ENCODE measurements at regions of chr2 and their contacts with region 1.

Region 1: DNA sequence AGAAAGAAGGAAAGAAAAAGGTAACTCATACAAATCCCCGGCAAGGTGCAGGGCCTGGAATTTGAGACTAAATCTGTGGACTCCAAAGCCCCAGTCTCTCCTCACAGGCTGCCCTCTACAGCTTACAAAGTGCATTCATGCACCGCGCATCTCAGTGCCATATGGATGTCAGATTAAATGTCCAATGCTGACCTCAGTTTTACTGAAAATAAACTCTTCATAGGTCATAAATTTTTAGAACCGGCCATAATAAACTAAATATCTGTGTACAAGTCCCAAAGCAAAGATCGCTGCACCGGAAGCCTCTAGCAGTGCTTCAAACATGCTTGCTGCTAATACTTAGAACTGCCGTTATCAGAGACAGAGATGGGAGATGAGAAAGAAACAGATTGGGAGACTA is 17.7 kb downstream of the ST6GAL2 start:
- DNase-seq: no peak
- H3K4me3 ChIP-seq: peak overlapping the region; percentile 32 to 51
- H3K27ac ChIP-seq: peak overlapping the region; percentile 80 to 84
- H3K4me1 ChIP-seq: peaks cover 3 to 22% of the 10 kb centered on the region in 2 donors
- H3K27me3 ChIP-seq: no peaks in the 10 kb centered on the region
- CTCF ChIP-seq: peak; percentile 4 to 46 (median 36)

Region 2: GRCh38 chr2:106812383-106812782 is 55.9 kb before region 1 on chr2:
- intact Hi-C with region 1: loop called (anchors 5 kb)
- DNase-seq: peak in 1 of 2 donors; percentile 78
- H3K4me3 ChIP-seq: peak overlapping the region in 1 of 2 donors; percentile 6
- H3K27ac ChIP-seq: peak overlapping the region; percentile 69 to 85
- H3K4me1 ChIP-seq: peaks cover 7 to 56% of the 10 kb centered on the region in 2 donors
- H3K27me3 ChIP-seq: no peaks in the 10 kb centered on the region
- CTCF ChIP-seq: no peak

Region 3: GRCh38 chr2:106851087-106851874 is 17.0 kb before region 1 on chr2:
- intact Hi-C with region 1: loop called (anchors 2 kb)
- DNase-seq: no peak
- H3K4me3 ChIP-seq: peak overlapping the region; percentile 22 to 41
- H3K27ac ChIP-seq: peak overlapping the region; percentile 81 to 85
- H3K4me1 ChIP-seq: peaks cover 10 to 73% of the 10 kb centered on the region in 2 donors
- H3K27me3 ChIP-seq: no peaks in the 10 kb centered on the region
- CTCF ChIP-seq: no peak

Region 4: DNA sequence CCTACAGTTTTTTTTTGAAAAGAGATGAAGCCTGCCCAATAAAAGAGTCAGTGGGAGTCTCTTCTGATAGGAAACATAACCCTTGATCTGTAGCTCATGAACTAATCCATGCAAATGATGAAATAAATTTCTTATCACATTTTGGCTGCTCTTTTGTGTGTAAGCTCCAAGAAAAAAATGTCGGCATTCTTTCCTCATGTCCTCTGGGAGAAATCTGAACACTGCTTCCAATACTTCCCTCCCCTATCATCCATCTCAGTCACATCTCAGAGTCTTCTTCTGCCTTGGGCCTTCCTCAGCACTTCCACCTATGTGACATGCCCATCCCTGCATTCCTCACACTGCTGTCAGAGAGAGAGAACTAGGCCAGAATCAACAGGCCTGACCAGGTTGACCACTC is 413.4 kb after region 1 on chr2:
- intact Hi-C with region 1: no loop called
- DNase-seq: no peak
- H3K4me3 ChIP-seq: no peak overlapping the region
- H3K27ac ChIP-seq: no peak overlapping the region
- H3K4me1 ChIP-seq: no peaks in the 10 kb centered on the region
- H3K27me3 ChIP-seq: no peaks in the 10 kb centered on the region
- CTCF ChIP-seq: no peak

Region 5: GRCh38 chr2:107325981-107326786 is 457.9 kb after region 1 on chr2:
- intact Hi-C with region 1: loop called (anchors 5 kb)
- DNase-seq: peak in 1 of 2 donors; percentile 68
- H3K4me3 ChIP-seq: no peak overlapping the region
- H3K27ac ChIP-seq: peak overlapping the region; percentile 79 to 80
- H3K4me1 ChIP-seq: peaks cover 0 to 15% of the 10 kb centered on the region in 2 donors
- H3K27me3 ChIP-seq: no peaks in the 10 kb centered on the region
- CTCF ChIP-seq: no peak